ENCODE measurements at regions of chr6 and their contacts with region 1.

Region 1: DNA sequence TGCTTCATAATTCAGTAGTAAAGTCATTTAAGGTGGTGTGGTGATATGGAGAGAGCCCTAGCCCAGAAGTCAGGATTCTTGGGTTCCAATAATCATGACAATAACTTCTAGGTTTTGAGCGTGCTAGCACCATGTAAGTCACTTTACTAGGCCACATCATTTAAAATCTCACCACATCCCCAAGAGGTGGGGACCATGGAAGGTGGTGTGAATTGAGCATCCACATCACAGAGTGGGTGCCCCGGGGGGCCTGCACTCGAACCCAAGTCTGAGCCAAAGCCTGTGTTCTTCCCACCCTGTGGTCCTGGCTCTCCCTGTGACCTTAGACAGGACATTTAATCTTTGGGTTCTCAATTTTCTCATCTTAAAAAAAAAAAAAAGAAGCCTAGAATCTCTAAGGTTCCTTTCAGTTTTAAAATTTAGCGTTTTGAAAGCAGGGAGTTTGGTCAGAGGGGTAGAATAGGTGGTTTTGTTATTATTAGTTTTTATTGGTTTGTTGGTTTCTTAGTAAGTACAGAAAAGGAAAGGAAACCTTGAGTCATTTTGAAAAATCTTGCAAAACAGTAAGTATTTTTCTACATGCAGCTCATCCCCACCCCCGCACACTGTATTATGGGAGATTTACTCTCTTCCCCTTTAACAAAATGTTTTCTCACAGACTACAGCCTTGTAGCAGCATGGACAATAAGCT is 26.4 kb downstream of the ARMC2 start:
- DNase-seq: peak; percentile 73
- H3K4me3 Mint-ChIP-seq: peak overlapping the region; percentile 65
- H3K27ac Mint-ChIP-seq: peak overlapping the region; percentile 91
- H3K4me1 Mint-ChIP-seq: peaks cover 46% of the 10 kb centered on the region
- H3K27me3 Mint-ChIP-seq: peaks cover 2% of the 10 kb centered on the region

Region 2: GRCh38 chr6:108438918-108439317 is 435.7 kb before region 1 on chr6:
- CTCF ChIA-PET with region 1: no interaction called
- POLR2A ChIA-PET with region 1: no interaction called
- intact Hi-C with region 1: loop called (anchors 2 kb)
- DNase-seq: no peak
- H3K4me3 Mint-ChIP-seq: no peak overlapping the region
- H3K27ac Mint-ChIP-seq: no peak overlapping the region
- H3K4me1 Mint-ChIP-seq: no peaks in the 10 kb centered on the region
- H3K27me3 Mint-ChIP-seq: peaks cover 28% of the 10 kb centered on the region

Region 3: DNA sequence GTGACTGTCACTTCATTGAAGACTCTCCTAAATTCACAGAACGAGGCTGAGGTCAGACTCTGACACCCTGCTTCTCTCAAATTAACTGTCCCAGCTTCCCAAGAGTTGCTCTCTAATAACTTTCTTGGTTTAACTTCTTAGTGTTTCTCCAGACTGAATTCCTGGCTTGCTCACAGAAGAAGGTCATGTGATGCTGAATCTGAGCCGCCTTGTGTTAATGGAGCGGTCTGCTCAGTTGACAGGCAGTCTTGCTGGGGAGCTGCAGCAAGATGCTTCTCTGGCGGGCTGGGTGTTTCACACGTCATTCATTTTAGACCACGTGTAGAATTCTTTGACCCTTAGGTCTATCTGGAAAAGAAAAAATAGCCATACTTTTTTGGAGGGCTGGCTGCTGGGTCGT is 206.6 kb before region 1 on chr6:
- CTCF ChIA-PET with region 1: no interaction called
- POLR2A ChIA-PET with region 1: no interaction called
- intact Hi-C with region 1: loop called (anchors 2 kb)
- DNase-seq: no peak
- H3K4me3 Mint-ChIP-seq: no peak overlapping the region
- H3K27ac Mint-ChIP-seq: no peak overlapping the region
- H3K4me1 Mint-ChIP-seq: peaks cover 56% of the 10 kb centered on the region
- H3K27me3 Mint-ChIP-seq: no peaks in the 10 kb centered on the region

Region 4: DNA sequence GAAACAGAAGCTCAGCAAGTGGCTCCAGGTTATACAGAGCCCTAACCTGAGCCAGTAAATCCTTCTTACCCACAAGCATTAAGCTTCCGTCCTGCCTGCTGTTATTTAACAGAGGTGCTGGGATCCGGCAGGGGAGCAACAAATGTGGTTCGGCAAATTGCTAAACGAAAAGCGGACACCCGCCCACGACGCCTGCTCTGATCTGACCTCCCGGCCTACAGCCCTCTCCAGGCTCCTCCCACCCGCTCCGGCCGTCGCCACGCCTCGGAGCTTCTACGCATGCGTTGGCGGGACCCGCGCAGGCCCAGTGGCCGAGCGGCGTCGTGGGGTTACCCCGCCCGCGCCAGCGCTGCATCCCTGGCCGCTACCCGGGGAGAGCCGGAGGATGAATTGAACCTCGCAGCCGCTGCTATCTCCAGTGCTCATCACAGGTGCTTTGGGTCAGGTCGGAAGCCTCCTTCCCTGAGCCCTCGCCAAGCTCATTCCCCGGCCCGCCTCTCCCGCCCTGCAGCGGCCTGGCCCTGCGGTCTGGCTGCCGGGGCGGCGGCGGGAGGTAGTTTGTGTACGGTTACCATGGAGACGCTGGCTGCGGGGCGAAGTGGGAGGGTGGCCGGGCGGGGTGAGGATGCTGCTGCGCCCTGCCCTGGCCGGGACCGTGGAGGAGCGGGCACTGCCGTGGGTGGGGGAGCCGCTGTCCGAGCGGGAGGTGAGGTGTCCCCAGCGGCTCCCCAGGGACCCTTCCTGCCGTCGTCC is 26.3 kb before region 1 on chr6 and contains the start of gene ARMC2:
- CTCF ChIA-PET with region 1: no interaction called
- POLR2A ChIA-PET with region 1: interaction called, 5 read pairs
- intact Hi-C with region 1: loop called (anchors 1 kb)
- DNase-seq: peak; percentile 93
- H3K4me3 Mint-ChIP-seq: peak within 1 kb of the TSS; percentile 83
- H3K27ac Mint-ChIP-seq: peak within 1 kb of the TSS; percentile 67
- H3K4me1 Mint-ChIP-seq: peaks cover 23% of the 10 kb centered on the region
- H3K27me3 Mint-ChIP-seq: no peaks in the 10 kb centered on the region
- total RNA-seq, gene ARMC2: 4.4 to 7.9 TPM

Region 5: GRCh38 chr6:108921547-108922361 is 47.1 kb after region 1 on chr6:
- CTCF ChIA-PET with region 1: interaction called, 4 read pairs
- POLR2A ChIA-PET with region 1: interaction called, 15 read pairs
- intact Hi-C with region 1: loop called (anchors 1 kb)
- DNase-seq: peak; percentile 68
- H3K4me3 Mint-ChIP-seq: peak overlapping the region; percentile 33
- H3K27ac Mint-ChIP-seq: peak overlapping the region; percentile 81
- H3K4me1 Mint-ChIP-seq: peaks cover 31% of the 10 kb centered on the region
- H3K27me3 Mint-ChIP-seq: peaks cover 4% of the 10 kb centered on the region

Region 6: DNA sequence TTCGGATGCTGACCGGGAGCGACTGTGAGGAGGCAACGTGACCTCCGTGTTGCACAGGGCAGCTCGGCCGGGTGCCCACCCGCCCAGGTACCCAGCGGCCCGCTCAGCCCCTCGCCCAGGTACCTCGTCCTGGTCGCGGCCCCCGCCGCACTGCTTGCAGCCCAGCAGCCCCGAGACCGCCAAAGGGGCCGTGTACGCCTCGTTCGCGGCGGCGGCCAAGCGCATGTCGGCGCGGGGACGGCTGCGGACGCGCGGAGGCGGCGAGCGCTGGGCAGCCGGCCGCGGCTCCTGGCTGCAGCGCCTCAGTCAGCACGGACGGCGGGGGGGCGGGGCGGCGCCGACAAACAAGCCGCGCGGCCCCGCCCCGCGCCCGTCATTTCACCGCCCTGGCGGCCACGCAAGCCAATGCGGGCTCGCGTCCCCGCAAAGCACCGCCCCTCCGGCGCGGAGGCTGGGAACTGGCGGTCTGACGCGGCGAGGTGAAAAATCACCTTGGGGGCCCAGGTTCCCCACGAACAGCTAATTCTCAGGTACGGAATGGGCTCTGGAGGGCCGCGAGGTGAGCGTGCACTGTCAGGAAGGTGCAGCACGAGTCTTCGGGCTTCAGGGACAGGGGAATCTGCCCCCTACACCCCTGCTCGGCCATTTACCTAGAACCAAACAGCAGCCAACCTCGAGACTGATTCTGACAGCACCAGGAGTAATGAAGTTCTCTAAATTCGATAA is 134.8 kb after region 1 on chr6:
- CTCF ChIA-PET with region 1: no interaction called
- POLR2A ChIA-PET with region 1: interaction called, 6 read pairs
- intact Hi-C with region 1: loop called (anchors 1 kb)
- DNase-seq: peak; percentile 93
- H3K4me3 Mint-ChIP-seq: peak overlapping the region; percentile 94
- H3K27ac Mint-ChIP-seq: peak overlapping the region; percentile 92
- H3K4me1 Mint-ChIP-seq: peaks cover 60% of the 10 kb centered on the region
- H3K27me3 Mint-ChIP-seq: no peaks in the 10 kb centered on the region

Region 7: DNA sequence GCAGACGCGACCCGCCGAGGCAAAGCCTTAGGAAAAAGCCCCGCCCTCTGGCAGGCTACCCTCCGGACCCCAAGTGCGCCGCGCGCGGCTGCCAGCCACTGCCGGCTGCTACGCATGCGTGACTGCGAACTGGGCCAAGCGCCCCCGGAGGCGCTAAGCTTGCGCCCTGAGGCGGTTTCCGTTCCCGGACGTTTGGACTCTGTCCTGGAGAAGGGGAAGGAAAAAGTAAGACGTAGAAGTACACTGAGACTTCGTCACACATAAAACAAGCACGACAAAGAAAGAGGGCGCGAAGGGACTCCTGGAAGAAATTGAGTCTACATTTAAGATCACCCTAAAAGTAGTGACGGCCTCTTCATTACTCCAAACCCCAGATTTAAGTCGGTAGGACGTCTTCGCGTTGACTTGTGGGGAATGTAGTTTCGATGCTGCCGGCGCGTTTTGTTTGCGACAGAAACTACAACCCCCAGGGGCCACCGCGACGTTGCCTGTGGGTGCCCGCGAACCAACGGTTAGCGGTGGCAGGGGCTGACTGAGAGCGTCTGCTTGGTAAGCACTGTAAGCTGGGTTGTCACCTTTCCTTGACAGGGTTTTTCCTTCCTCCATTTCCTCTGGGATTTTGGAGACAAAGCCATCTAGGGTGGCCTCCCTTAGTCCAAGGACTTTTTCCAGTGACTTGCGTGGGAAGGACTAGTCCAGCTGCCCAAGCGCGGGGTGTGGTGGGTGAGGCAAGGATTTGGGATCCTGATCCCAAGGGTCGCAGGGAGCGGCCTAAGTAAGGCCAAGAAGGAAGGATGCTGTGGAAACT is 220.6 kb after region 1 on chr6 and contains the start of gene CEP57L1:
- CTCF ChIA-PET with region 1: no interaction called
- POLR2A ChIA-PET with region 1: no interaction called
- intact Hi-C with region 1: no loop called
- DNase-seq: peak; percentile 97
- H3K4me3 Mint-ChIP-seq: peak within 1 kb of the TSS; percentile 96
- H3K27ac Mint-ChIP-seq: peak within 1 kb of the TSS; percentile 100
- H3K4me1 Mint-ChIP-seq: peaks cover 44% of the 10 kb centered on the region
- H3K27me3 Mint-ChIP-seq: no peaks in the 10 kb centered on the region
- total RNA-seq, gene CEP57L1: 23.0 to 27.8 TPM

Measured in activated CD4-positive, alpha-beta memory T cell treated with anti-CD3 and anti-CD28 coated beads for 36 hours (primary cell).